PC-9 (cell line): ENCODE measurements at regions of chr6 and their contacts with region 1.

Region 1: GRCh38 chr6:43667245-43668150 is 20.1 kb downstream of the MRPS18A start:
- DNase-seq: peak; percentile 61 to 86
- H3K4me3 ChIP-seq: peak overlapping the region; percentile 25; the same call in 1 of the 2 replicates
- H3K27ac ChIP-seq: peak overlapping the region; percentile 43
- H3K4me1 ChIP-seq: peaks cover 62% of the 10 kb centered on the region
- H3K27me3 ChIP-seq: no peaks in the 10 kb centered on the region
- CTCF ChIP-seq: peak; percentile 94

Region 2: GRCh38 chr6:43608310-43608763 is 59.2 kb before region 1 on chr6:
- CTCF ChIA-PET with region 1: interaction called, 3 read pairs
- POLR2A ChIA-PET with region 1: no interaction called
- intact Hi-C with region 1: loop called (anchors 2 kb)
- DNase-seq: peak; percentile 60 to 63
- H3K4me3 ChIP-seq: no peak overlapping the region
- H3K27ac ChIP-seq: no peak overlapping the region
- H3K4me1 ChIP-seq: no peaks in the 10 kb centered on the region
- H3K27me3 ChIP-seq: no peaks in the 10 kb centered on the region
- CTCF ChIP-seq: peak; percentile 85

Region 3: GRCh38 chr6:43657221-43657802 is 10.2 kb before region 1 on chr6:
- CTCF ChIA-PET with region 1: interaction called, 18 read pairs
- POLR2A ChIA-PET with region 1: no interaction called
- intact Hi-C with region 1: no loop called
- DNase-seq: no peak
- H3K4me3 ChIP-seq: no peak overlapping the region
- H3K27ac ChIP-seq: no peak overlapping the region
- H3K4me1 ChIP-seq: no peaks in the 10 kb centered on the region
- H3K27me3 ChIP-seq: no peaks in the 10 kb centered on the region
- CTCF ChIP-seq: no peak

Region 4: GRCh38 chr6:43723737-43724295 is 56.3 kb after region 1 on chr6:
- CTCF ChIA-PET with region 1: interaction called, 5 read pairs
- POLR2A ChIA-PET with region 1: no interaction called
- intact Hi-C with region 1: loop called (anchors 5 kb)
- DNase-seq: peak; percentile 69 to 74
- H3K4me3 ChIP-seq: no peak overlapping the region
- H3K27ac ChIP-seq: no peak overlapping the region
- H3K4me1 ChIP-seq: peaks cover 28% of the 10 kb centered on the region
- H3K27me3 ChIP-seq: no peaks in the 10 kb centered on the region
- CTCF ChIP-seq: peak; percentile 83

Region 5: DNA sequence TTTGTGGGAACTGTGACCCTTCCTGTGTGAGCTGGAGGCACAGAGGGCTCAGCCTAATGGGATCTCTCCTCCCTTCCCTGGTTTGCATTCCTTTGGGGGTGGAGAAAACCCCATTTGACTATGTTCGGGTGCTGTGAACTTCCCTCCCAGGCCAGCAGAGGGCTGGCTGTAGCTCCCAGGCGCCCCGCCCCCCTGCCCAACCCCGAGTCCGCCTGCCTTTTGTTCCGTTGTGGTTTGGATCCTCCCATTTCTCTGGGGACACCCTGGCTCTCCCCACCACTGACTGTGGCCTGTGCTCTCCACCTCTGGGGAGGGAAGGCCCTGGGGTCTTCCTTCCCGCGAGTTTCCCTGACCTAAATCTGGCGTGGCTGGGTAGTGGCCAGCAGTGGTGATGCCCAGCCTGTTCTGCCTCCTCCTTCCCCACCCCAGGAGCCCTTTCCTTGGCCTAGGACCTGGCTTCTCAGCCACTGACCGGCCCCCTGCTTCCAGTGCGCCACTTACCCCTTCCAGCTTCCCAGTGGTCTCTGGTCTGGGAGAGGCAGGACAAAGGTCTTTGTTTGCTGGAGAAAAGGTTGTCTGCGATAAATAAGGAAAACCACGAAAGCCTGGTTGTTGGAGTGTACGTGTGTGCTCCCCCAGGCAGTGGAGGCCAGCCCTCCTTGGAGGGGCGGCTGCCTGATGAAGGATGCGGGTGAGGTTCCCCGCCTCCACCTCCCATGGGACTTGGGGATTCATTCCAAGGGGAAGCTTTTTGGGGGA is 107.5 kb after region 1 on chr6:
- CTCF ChIA-PET with region 1: interaction called, 11 read pairs
- POLR2A ChIA-PET with region 1: interaction called, 5 read pairs
- intact Hi-C with region 1: loop called (anchors 1 kb)
- DNase-seq: peak; percentile 65 to 71
- H3K4me3 ChIP-seq: peak overlapping the region; percentile 90
- H3K27ac ChIP-seq: peak overlapping the region; percentile 94; the same call in 1 of the 2 replicates
- H3K4me1 ChIP-seq: peaks cover 35% of the 10 kb centered on the region
- H3K27me3 ChIP-seq: no peaks in the 10 kb centered on the region
- CTCF ChIP-seq: peak; percentile 85

Region 6: GRCh38 chr6:43951063-43951755 is 283.7 kb after region 1 on chr6:
- CTCF ChIA-PET with region 1: interaction called, 3 read pairs
- POLR2A ChIA-PET with region 1: no interaction called
- intact Hi-C with region 1: loop called (anchors 5 kb)
- DNase-seq: peak; percentile 44 to 62
- H3K4me3 ChIP-seq: no peak overlapping the region
- H3K27ac ChIP-seq: no peak overlapping the region
- H3K4me1 ChIP-seq: peaks cover 21% of the 10 kb centered on the region
- H3K27me3 ChIP-seq: no peaks in the 10 kb centered on the region
- CTCF ChIP-seq: peak; percentile 63